Transverse colon (tissue), 4 donors: ENCODE measurements at regions of chr12 and their contacts with region 1.

Region 1: DNA sequence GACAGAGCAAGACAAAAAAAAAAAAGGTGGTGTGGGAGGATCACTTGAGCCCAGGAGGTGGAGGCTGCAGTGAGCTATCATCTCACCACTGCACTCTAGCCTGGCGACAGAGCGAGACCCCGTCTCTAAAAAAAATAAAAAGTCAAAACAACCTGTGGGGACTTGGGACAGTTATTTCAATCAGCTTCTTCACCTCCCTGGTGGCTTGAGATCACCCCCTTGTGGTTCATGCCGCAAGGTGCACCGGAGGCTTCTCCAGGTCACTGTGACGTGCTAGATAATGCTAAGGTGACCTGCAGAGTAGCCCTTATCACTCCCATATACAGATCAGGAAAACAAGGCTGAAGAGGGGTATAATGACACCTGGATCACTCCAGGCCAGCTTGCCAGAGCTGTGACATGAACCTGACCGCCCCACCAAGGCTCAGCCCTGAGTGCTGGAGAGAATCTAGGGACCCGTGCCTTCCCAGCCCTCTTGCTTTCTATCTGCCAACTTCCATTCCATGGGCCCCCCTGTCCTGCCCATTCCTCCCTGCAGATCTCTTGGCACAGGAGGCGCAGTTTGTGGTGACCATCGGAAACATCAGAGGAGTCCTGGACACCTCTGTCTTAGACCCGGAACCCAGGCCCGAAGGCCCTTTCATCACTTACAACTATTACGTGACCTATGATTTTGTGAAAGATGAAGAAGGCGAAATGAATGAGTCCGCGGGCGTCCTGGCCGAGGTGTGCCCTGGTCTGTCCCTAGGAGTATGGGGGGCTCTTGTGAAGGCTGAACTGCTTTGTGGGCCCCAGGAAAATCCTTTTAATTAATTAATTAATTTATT is 8.1 kb downstream of the LRRC43 start:
- DNase-seq: peak; percentile 84
- H3K4me3 ChIP-seq: no peak overlapping the region
- H3K27ac ChIP-seq: no peak overlapping the region
- H3K4me1 ChIP-seq: no peaks in the 10 kb centered on the region
- H3K27me3 ChIP-seq: no peaks in the 10 kb centered on the region
- CTCF ChIP-seq: peak; percentile 70 to 84 (median 81)
- EP300 ChIP-seq: no peak
- POLR2A ChIP-seq: no peak

Region 2: GRCh38 chr12:121917979-121918678 is 272.9 kb before region 1 on chr12 and contains the start of gene CFAP251:
- in situ Hi-C with region 1: loop called in 1 of 4 experiments (anchors 25 kb)
- intact Hi-C with region 1: no loop called
- DNase-seq: peak; percentile 99
- H3K4me3 ChIP-seq: peak within 1 kb of the TSS; percentile 20 to 56 (median 37)
- H3K27ac ChIP-seq: peak within 1 kb of the TSS; percentile 14 to 63 (median 41)
- H3K4me1 ChIP-seq: peaks cover 3 to 12% (median 8%) of the 10 kb centered on the region in 4 donors
- H3K27me3 ChIP-seq: no peaks in the 10 kb centered on the region
- CTCF ChIP-seq: peak; percentile 64 to 94 (median 76)
- EP300 ChIP-seq: no peak
- POLR2A ChIP-seq: peak; percentile 34
- total RNA-seq, gene CFAP251: 0.41 to 1.7 TPM in 2 of 4 donors, not detected in the others

Region 3: GRCh38 chr12:122040579-122041386 is 150.3 kb before region 1 on chr12:
- in situ Hi-C with region 1: no loop called
- intact Hi-C with region 1: no loop called
- DNase-seq: peak; percentile 79
- H3K4me3 ChIP-seq: no peak overlapping the region
- H3K27ac ChIP-seq: peak overlapping the region; percentile 30 to 71 (median 60)
- H3K4me1 ChIP-seq: peaks cover 0 to 20% (median 0%) of the 10 kb centered on the region in 4 donors
- H3K27me3 ChIP-seq: no peaks in the 10 kb centered on the region
- CTCF ChIP-seq: no peak
- EP300 ChIP-seq: no peak
- POLR2A ChIP-seq: no peak

Region 4: GRCh38 chr12:122051231-122051876 is 139.7 kb before region 1 on chr12:
- in situ Hi-C with region 1: loop called in 1 of 4 experiments (anchors 10 kb)
- intact Hi-C with region 1: no loop called
- DNase-seq: no peak
- H3K4me3 ChIP-seq: no peak overlapping the region
- H3K27ac ChIP-seq: peak overlapping the region; percentile 44 to 75 (median 65)
- H3K4me1 ChIP-seq: peaks cover 12 to 31% (median 16%) of the 10 kb centered on the region in 4 donors
- H3K27me3 ChIP-seq: no peaks in the 10 kb centered on the region
- CTCF ChIP-seq: no peak
- EP300 ChIP-seq: no peak
- POLR2A ChIP-seq: no peak